Naive thymus-derived CD4-positive, alpha-beta T cell (primary cell): ENCODE measurements at regions of chr6 and their contacts with region 1.

Region 1: DNA sequence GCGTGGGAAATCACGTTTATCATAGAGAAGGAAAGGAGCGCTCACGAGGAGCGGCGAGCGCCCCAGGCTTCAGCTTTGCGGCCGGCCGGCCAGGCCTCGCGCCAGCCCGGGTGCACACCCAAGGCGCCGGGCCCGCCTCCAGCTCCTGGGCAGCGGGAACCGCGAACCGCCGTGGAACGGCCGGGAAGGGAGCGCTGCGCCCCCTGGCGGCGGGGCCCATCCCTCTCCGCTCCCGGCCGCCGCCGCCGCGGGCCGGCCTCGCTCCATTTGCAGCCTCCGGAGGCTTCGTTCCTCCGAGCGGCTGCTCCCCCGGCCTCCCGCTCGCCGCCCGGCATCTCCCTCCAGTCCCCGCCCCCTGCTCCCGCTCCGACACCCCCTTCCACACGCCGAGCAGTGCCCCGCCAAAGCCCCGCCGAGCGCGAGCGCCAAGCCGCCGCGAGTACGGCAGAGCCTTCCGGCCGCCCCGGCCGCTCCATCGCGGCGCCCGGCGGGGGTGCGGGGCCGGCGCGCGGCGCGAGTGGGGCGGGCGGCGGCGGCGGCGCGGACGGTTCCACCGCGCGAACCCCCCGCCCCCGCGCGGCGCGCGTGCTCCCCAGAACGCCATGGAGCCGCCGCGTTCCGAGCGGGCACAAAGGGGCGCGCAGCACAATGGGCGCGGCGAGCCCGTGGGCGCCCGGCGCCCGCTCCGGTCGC is 956 bp downstream of the BEND3 start:
- DNase-seq: peak; percentile 39 to 85 (median 67)
- ATAC-seq: peak; percentile 88
- H3K4me3 ChIP-seq: peak overlapping the region; percentile 32
- H3K4me3 Mint-ChIP-seq: peak overlapping the region; percentile 71 to 88 (median 85)
- H3K27ac ChIP-seq: no peak overlapping the region
- H3K27ac Mint-ChIP-seq: peak overlapping the region in 5 of 9 donors; percentile 49 to 77 (median 63)
- H3K4me1 ChIP-seq: peaks cover 14% of the 10 kb centered on the region in 2 donors
- H3K4me1 Mint-ChIP-seq: peaks cover 8 to 21% (median 18%) of the 10 kb centered on the region in 7 donors
- H3K27me3 ChIP-seq: no peaks in the 10 kb centered on the region
- H3K27me3 Mint-ChIP-seq: peaks cover 0 to 22% (median 7%) of the 10 kb centered on the region in 5 donors

Region 2: GRCh38 chr6:106339334-106340029 is 774.9 kb before region 1 on chr6:
- CTCF ChIA-PET with region 1: no interaction called
- POLR2A ChIA-PET with region 1: no interaction called
- intact Hi-C with region 1: loop called in 1 of 2 experiments (anchors 2 kb)
- DNase-seq: peak in 8 of 9 donors; percentile 19 to 50 (median 35)
- ATAC-seq: peak; percentile 88
- H3K4me3 ChIP-seq: no peak overlapping the region
- H3K4me3 Mint-ChIP-seq: peak overlapping the region in 7 of 10 donors; percentile 15 to 67 (median 44)
- H3K27ac ChIP-seq: no peak overlapping the region
- H3K27ac Mint-ChIP-seq: no peak overlapping the region
- H3K4me1 ChIP-seq: no peaks in the 10 kb centered on the region
- H3K4me1 Mint-ChIP-seq: peaks cover 0 to 9% (median 6%) of the 10 kb centered on the region in 7 donors
- H3K27me3 ChIP-seq: no peaks in the 10 kb centered on the region
- H3K27me3 Mint-ChIP-seq: peaks cover 14 to 44% (median 20%) of the 10 kb centered on the region in 5 donors

Region 3: GRCh38 chr6:106519460-106520394 is 594.6 kb before region 1 on chr6:
- CTCF ChIA-PET with region 1: no interaction called
- POLR2A ChIA-PET with region 1: no interaction called
- intact Hi-C with region 1: loop called (anchors 10 kb)
- DNase-seq: peak; percentile 38 to 80 (median 72)
- ATAC-seq: peak; percentile 68
- H3K4me3 ChIP-seq: peak overlapping the region; percentile 69
- H3K4me3 Mint-ChIP-seq: peak overlapping the region; percentile 82 to 96 (median 93)
- H3K27ac ChIP-seq: peak overlapping the region; percentile 86
- H3K27ac Mint-ChIP-seq: peak overlapping the region; percentile 92 to 99 (median 95)
- H3K4me1 ChIP-seq: peaks cover 42 to 47% of the 10 kb centered on the region in 2 donors
- H3K4me1 Mint-ChIP-seq: peaks cover 36 to 87% (median 71%) of the 10 kb centered on the region in 7 donors
- H3K27me3 ChIP-seq: no peaks in the 10 kb centered on the region
- H3K27me3 Mint-ChIP-seq: no peaks in the 10 kb centered on the region

Region 4: DNA sequence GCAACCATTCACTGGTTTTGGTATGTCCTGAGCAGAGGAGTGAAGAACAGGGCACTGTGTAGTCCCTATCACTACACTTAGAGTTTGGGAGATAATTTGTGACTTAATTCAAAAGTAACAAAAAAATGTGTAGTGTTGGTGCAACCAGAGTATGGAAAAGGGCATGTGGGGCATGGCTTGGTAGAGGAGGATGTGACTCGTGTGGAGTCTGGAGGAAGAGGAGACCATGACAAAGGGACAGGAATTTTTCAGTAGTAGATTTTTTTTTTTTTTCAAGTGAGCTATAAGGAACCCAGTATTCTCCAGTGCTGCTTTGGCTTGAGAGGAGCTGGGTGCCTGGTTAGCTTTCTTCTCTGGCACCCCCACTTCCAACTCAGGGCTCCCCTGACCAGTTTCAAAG is 81.2 kb before region 1 on chr6:
- CTCF ChIA-PET with region 1: interaction called, 3 read pairs
- POLR2A ChIA-PET with region 1: no interaction called
- intact Hi-C with region 1: loop called (anchors 1 kb)
- DNase-seq: no peak
- ATAC-seq: no peak
- H3K4me3 ChIP-seq: no peak overlapping the region
- H3K4me3 Mint-ChIP-seq: no peak overlapping the region
- H3K27ac ChIP-seq: no peak overlapping the region
- H3K27ac Mint-ChIP-seq: peak overlapping the region in 1 of 9 donors; percentile 24
- H3K4me1 ChIP-seq: peaks cover 3 to 17% of the 10 kb centered on the region in 2 donors
- H3K4me1 Mint-ChIP-seq: peaks cover 22 to 56% (median 46%) of the 10 kb centered on the region in 7 donors
- H3K27me3 ChIP-seq: no peaks in the 10 kb centered on the region
- H3K27me3 Mint-ChIP-seq: no peaks in the 10 kb centered on the region

Region 5: DNA sequence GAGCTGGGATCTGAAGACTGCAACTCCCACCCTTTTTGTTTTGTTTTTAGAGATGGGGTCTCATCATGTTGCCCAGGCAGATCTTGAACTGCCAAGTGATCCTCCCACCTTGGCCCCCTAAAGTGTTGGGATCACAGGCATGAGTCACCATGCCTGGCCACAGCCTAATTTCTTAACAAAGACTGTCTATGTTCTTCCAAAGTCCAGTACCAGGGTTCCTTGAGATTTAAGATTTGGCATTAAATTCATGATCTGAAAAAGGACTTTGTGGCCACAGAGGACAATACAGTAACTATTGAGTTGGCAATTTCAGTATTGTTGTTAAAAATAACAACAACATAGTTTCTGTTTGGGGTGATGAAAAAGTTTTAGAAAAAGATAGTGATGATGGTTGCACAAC is 29.7 kb after region 1 on chr6:
- CTCF ChIA-PET with region 1: no interaction called
- POLR2A ChIA-PET with region 1: no interaction called
- intact Hi-C with region 1: no loop called
- DNase-seq: no peak
- ATAC-seq: no peak
- H3K4me3 ChIP-seq: no peak overlapping the region
- H3K4me3 Mint-ChIP-seq: no peak overlapping the region
- H3K27ac ChIP-seq: no peak overlapping the region
- H3K27ac Mint-ChIP-seq: no peak overlapping the region
- H3K4me1 ChIP-seq: no peaks in the 10 kb centered on the region
- H3K4me1 Mint-ChIP-seq: no peaks in the 10 kb centered on the region
- H3K27me3 ChIP-seq: no peaks in the 10 kb centered on the region
- H3K27me3 Mint-ChIP-seq: no peaks in the 10 kb centered on the region

Region 6: GRCh38 chr6:107202846-107203468 is 88.6 kb after region 1 on chr6:
- CTCF ChIA-PET with region 1: no interaction called
- POLR2A ChIA-PET with region 1: no interaction called
- intact Hi-C with region 1: no loop called
- DNase-seq: no peak
- ATAC-seq: no peak
- H3K4me3 ChIP-seq: no peak overlapping the region
- H3K4me3 Mint-ChIP-seq: no peak overlapping the region
- H3K27ac ChIP-seq: no peak overlapping the region
- H3K27ac Mint-ChIP-seq: no peak overlapping the region
- H3K4me1 ChIP-seq: no peaks in the 10 kb centered on the region
- H3K4me1 Mint-ChIP-seq: no peaks in the 10 kb centered on the region
- H3K27me3 ChIP-seq: no peaks in the 10 kb centered on the region
- H3K27me3 Mint-ChIP-seq: no peaks in the 10 kb centered on the region

Region 7: GRCh38 chr6:107459283-107460082 is 345.1 kb after region 1 on chr6 and contains the start of gene PDSS2:
- CTCF ChIA-PET with region 1: no interaction called
- POLR2A ChIA-PET with region 1: no interaction called
- intact Hi-C with region 1: loop called (anchors 1 kb)
- DNase-seq: peak; percentile 83 to 98 (median 95)
- ATAC-seq: peak; percentile 100
- H3K4me3 ChIP-seq: peak within 1 kb of the TSS; percentile 95
- H3K4me3 Mint-ChIP-seq: peak within 1 kb of the TSS; percentile 87 to 99 (median 96)
- H3K27ac ChIP-seq: peak within 1 kb of the TSS; percentile 75
- H3K27ac Mint-ChIP-seq: peak within 1 kb of the TSS; percentile 92 to 99 (median 96)
- H3K4me1 ChIP-seq: peaks cover 5% of the 10 kb centered on the region in 2 donors
- H3K4me1 Mint-ChIP-seq: peaks cover 10 to 41% (median 36%) of the 10 kb centered on the region in 7 donors
- H3K27me3 ChIP-seq: no peaks in the 10 kb centered on the region
- H3K27me3 Mint-ChIP-seq: peaks cover 0 to 7% (median 0%) of the 10 kb centered on the region in 5 donors
- total RNA-seq, gene PDSS2: 12.0 to 15.3 (median 12.1) TPM

Region 8: DNA sequence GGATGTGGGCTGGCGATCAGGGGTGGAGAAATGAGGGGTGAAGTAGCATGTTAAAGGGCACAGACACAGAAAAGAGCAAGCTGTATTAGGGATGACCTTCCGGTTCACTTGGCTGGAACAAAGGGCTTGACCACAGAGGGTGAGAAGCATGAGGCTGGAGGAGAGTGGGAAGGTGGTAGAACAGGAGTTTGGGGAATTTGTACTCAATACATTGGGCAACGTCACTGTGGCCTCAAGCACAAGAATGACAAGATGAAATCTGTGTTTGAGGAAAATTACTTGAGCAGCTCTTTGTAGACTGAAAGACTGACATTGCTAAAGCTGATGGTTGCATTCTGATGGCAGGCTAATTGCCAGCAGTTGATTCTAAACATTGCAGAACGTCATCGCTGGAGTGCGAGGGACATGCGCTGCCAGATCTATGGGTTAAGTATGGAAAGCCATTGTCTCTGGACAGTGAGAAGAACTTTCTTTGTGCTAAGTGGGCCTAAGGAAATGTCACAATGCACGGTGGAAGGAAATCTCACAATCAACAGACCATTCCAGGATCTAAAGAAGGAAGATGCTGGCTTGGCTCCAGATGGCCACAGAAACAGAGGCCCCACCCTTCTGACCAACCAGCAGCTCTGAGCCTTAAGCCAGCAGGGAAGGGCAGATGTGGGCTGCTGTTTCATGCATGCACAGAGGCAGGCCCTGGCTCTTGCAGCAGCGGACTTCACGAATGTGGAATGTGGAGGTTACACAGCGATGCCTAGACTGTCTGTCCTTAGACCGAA is 531.6 kb after region 1 on chr6:
- CTCF ChIA-PET with region 1: no interaction called
- POLR2A ChIA-PET with region 1: no interaction called
- intact Hi-C with region 1: no loop called
- DNase-seq: no peak
- ATAC-seq: no peak
- H3K4me3 ChIP-seq: no peak overlapping the region
- H3K4me3 Mint-ChIP-seq: no peak overlapping the region
- H3K27ac ChIP-seq: no peak overlapping the region
- H3K27ac Mint-ChIP-seq: no peak overlapping the region
- H3K4me1 ChIP-seq: no peaks in the 10 kb centered on the region
- H3K4me1 Mint-ChIP-seq: peaks cover 0 to under 1% (median 0%) of the 10 kb centered on the region in 7 donors
- H3K27me3 ChIP-seq: no peaks in the 10 kb centered on the region
- H3K27me3 Mint-ChIP-seq: peaks cover 0 to 38% (median 4%) of the 10 kb centered on the region in 5 donors